Transverse colon (tissue), 4 donors: ENCODE measurements at regions of chr3 and their contacts with region 1.

Region 1: DNA sequence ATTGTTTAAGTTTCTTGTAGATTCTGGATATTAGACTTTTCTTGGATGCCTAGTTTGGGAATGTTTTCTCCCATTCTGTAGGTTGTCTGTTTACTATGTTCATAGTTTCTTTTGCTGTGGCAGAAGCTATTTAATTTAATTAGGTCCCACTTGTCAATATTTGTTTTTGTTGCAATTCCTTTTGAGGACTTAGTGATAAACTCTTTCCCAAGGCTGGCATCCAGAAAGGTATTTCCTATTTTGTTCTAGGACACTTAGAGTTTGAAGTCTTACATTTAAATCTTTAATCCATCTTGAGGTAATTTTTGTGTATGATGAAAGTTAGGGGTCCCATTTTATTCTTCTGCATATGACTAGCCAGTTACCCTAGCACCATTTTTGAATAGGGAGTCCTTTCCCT is 54.9 kb downstream of the MME start:
- DNase-seq: no peak
- H3K4me3 ChIP-seq: no peak overlapping the region
- H3K27ac ChIP-seq: no peak overlapping the region
- H3K4me1 ChIP-seq: no peaks in the 10 kb centered on the region
- H3K27me3 ChIP-seq: no peaks in the 10 kb centered on the region
- CTCF ChIP-seq: no peak
- EP300 ChIP-seq: no peak
- POLR2A ChIP-seq: no peak

Region 2: GRCh38 chr3:154986727-154987126 is 148.3 kb before region 1 on chr3:
- in situ Hi-C with region 1: no loop called
- intact Hi-C with region 1: loop called (anchors 1 kb)
- DNase-seq: no peak
- H3K4me3 ChIP-seq: no peak overlapping the region
- H3K27ac ChIP-seq: no peak overlapping the region
- H3K4me1 ChIP-seq: no peaks in the 10 kb centered on the region
- H3K27me3 ChIP-seq: no peaks in the 10 kb centered on the region
- CTCF ChIP-seq: no peak
- EP300 ChIP-seq: no peak
- POLR2A ChIP-seq: no peak

Region 3: GRCh38 chr3:155154255-155154654 is 19.3 kb after region 1 on chr3:
- in situ Hi-C with region 1: no loop called
- intact Hi-C with region 1: no loop called
- DNase-seq: no peak
- H3K4me3 ChIP-seq: no peak overlapping the region
- H3K27ac ChIP-seq: no peak overlapping the region
- H3K4me1 ChIP-seq: no peaks in the 10 kb centered on the region
- H3K27me3 ChIP-seq: no peaks in the 10 kb centered on the region
- CTCF ChIP-seq: no peak
- EP300 ChIP-seq: no peak
- POLR2A ChIP-seq: no peak